PC-3 (cell line): ENCODE measurements at regions of chr18 and their contacts with region 1.

Region 1: DNA sequence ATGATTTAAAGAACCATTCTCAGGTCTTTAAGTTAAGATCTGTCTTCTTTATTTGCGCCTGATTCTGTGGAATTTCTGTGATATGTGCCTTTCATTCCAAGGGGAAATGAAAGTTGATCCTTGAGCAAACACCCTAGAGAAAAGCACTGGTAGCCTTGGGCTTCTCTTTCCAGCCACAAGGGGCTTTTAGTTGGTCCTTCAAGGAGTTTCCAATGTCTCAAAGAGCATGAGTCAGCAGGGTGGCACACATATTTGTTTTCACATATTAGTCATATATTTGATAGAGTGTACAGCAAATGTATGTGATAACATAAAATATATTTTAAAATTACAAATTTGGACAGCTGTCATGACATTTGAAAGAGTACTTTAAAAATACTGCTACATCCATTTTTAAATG is 339.5 kb downstream of the TXNL1 start:
- DNase-seq: peak; percentile 96
- ATAC-seq: peak; percentile 97
- H3K4me3 ChIP-seq: 0 out of 2 replicates have a peak overlapping the region, but pooled peaks have one; percentile 6
- H3K27ac ChIP-seq: peak overlapping the region; percentile 87
- H3K4me1 ChIP-seq: peaks cover 20% of the 10 kb centered on the region
- H3K27me3 ChIP-seq: no peaks in the 10 kb centered on the region
- CTCF ChIP-seq: peak; percentile 63

Region 2: GRCh38 chr18:55589625-55590291 is 709.2 kb before region 1 on chr18:
- CTCF ChIA-PET with region 1: no interaction called
- POLR2A ChIA-PET with region 1: no interaction called
- intact Hi-C with region 1: loop called (anchors 5 kb)
- DNase-seq: peak; percentile 93
- ATAC-seq: peak; percentile 88
- H3K4me3 ChIP-seq: peak overlapping the region; percentile 91
- H3K27ac ChIP-seq: peak overlapping the region; percentile 42
- H3K4me1 ChIP-seq: peaks cover 5% of the 10 kb centered on the region; the same call in 1 of the 2 replicates
- H3K27me3 ChIP-seq: no peaks in the 10 kb centered on the region
- CTCF ChIP-seq: no peak

Region 3: DNA sequence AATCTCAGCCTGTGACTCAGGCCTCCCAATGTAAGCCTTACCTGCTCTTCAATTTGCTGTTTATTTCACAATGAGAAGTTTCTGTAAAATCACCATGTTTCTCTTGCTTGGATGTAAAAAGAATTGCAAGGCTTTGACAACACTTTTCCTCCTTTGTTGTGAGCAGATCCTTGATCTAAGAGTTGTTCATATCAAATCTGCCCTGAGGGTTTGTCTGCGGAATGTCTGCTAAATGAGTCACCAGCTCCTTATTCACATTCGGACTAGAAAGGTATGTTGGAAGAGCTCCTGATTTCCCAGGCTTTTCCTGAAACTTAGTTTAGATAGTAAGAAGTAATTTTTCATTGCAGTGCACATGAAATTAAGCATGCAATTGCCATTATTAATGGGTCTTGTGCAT is 442.7 kb before region 1 on chr18:
- CTCF ChIA-PET with region 1: no interaction called
- POLR2A ChIA-PET with region 1: no interaction called
- intact Hi-C with region 1: loop called (anchors 5 kb)
- DNase-seq: peak; percentile 99
- ATAC-seq: peak; percentile 95
- H3K4me3 ChIP-seq: peak overlapping the region; percentile 23; the same call in 1 of the 2 replicates
- H3K27ac ChIP-seq: peak overlapping the region; percentile 72
- H3K4me1 ChIP-seq: peaks cover 37% of the 10 kb centered on the region
- H3K27me3 ChIP-seq: no peaks in the 10 kb centered on the region
- CTCF ChIP-seq: no peak

Region 4: GRCh38 chr18:56168049-56168781 is 130.7 kb before region 1 on chr18:
- CTCF ChIA-PET with region 1: no interaction called
- POLR2A ChIA-PET with region 1: no interaction called
- intact Hi-C with region 1: loop called (anchors 1 kb)
- DNase-seq: peak; percentile 92
- ATAC-seq: peak; percentile 93
- H3K4me3 ChIP-seq: peak overlapping the region; percentile 39; the same call in 1 of the 2 replicates
- H3K27ac ChIP-seq: peak overlapping the region; percentile 93
- H3K4me1 ChIP-seq: peaks cover 40% of the 10 kb centered on the region
- H3K27me3 ChIP-seq: no peaks in the 10 kb centered on the region
- CTCF ChIP-seq: no peak

Region 5: GRCh38 chr18:56575819-56576663 is 277.1 kb after region 1 on chr18:
- CTCF ChIA-PET with region 1: no interaction called
- POLR2A ChIA-PET with region 1: no interaction called
- intact Hi-C with region 1: loop called (anchors 1 kb)
- DNase-seq: peak; percentile 80
- ATAC-seq: peak; percentile 91
- H3K4me3 ChIP-seq: no peak overlapping the region
- H3K27ac ChIP-seq: no peak overlapping the region
- H3K4me1 ChIP-seq: 0 out of 2 replicates have a peak, but pooled peaks cover 8% of the 10 kb centered on the region
- H3K27me3 ChIP-seq: no peaks in the 10 kb centered on the region
- CTCF ChIP-seq: peak; percentile 87